CD8-positive, alpha-beta memory T cell (primary cell): ENCODE measurements at regions of chr20 and their contacts with region 1.

Region 1: DNA sequence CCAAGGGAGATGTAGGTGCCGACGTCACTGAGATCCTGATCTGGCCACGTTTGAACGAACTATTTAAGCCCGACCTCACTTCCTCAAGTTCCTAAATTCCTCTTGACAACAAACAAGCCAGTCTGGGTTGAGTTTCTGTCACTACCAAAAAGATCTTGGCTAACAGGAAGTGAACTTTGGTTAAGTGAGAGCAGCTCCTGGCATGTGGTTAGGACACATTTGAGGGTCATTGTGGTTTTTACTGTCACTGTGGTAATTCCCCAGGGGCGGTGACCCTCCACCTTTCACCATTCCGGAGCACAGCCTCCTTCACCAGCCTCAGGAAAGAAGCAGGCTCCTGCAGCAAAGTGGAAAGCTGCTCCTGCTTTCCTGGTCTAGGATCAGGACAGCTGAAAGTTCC is 43.1 kb upstream of the ZNF831 start:
- DNase-seq: peak in 4 of 5 donors; percentile 18 to 69 (median 51)
- H3K4me3 ChIP-seq: no peak overlapping the region
- H3K4me3 Mint-ChIP-seq: peak overlapping the region; percentile 3 to 87 (median 59)
- H3K27ac ChIP-seq: peak overlapping the region; percentile 44
- H3K27ac Mint-ChIP-seq: peak overlapping the region; percentile 95 to 100 (median 99)
- H3K4me1 ChIP-seq: peaks cover 78% of the 10 kb centered on the region
- H3K4me1 Mint-ChIP-seq: peaks cover 71 to 87% (median 84%) of the 10 kb centered on the region in 3 donors
- H3K27me3 ChIP-seq: no peaks in the 10 kb centered on the region
- H3K27me3 Mint-ChIP-seq: peaks cover 0 to 2% of the 10 kb centered on the region in 2 donors

Region 2: DNA sequence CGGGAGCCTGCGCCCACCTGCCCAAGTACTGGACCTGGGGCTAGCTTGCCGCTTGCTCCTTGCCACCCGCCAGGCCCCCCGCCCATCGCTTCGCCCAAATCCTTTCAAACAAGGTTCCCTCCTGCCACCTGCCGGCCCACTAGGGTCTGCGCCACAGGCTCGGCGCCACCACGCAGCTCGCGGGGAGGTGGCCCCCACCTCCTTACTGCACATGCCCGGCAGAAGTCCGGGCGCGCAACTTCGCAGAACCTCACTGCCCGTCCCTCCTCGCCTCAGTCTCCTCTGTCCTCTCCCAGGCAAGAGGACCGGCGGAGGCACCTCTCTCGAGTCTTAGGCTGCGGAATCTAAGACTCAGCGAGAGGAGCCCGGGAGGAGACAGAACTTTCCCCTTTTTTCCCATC is 281.0 kb before region 1 on chr20:
- CTCF ChIA-PET with region 1: no interaction called
- POLR2A ChIA-PET with region 1: no interaction called
- DNase-seq: peak in 1 of 5 donors; percentile 27
- H3K4me3 ChIP-seq: no peak overlapping the region
- H3K4me3 Mint-ChIP-seq: peak overlapping the region in 3 of 7 donors; percentile 11 to 56 (median 32)
- H3K27ac ChIP-seq: no peak overlapping the region
- H3K27ac Mint-ChIP-seq: no peak overlapping the region
- H3K4me1 ChIP-seq: no peaks in the 10 kb centered on the region
- H3K4me1 Mint-ChIP-seq: peaks cover 8 to 21% (median 14%) of the 10 kb centered on the region in 3 donors
- H3K27me3 ChIP-seq: peaks cover 3% of the 10 kb centered on the region
- H3K27me3 Mint-ChIP-seq: peaks cover 37 to 53% of the 10 kb centered on the region in 2 donors

Region 3: GRCh38 chr20:59102841-59103299 is 17.6 kb before region 1 on chr20:
- CTCF ChIA-PET with region 1: interaction called, 10 read pairs
- POLR2A ChIA-PET with region 1: no interaction called
- DNase-seq: no peak
- H3K4me3 ChIP-seq: no peak overlapping the region
- H3K4me3 Mint-ChIP-seq: no peak overlapping the region
- H3K27ac ChIP-seq: no peak overlapping the region
- H3K27ac Mint-ChIP-seq: peak overlapping the region in 3 of 8 donors; percentile 0 to 47 (median 47)
- H3K4me1 ChIP-seq: peaks cover 7% of the 10 kb centered on the region
- H3K4me1 Mint-ChIP-seq: peaks cover 11 to 21% (median 12%) of the 10 kb centered on the region in 3 donors
- H3K27me3 ChIP-seq: no peaks in the 10 kb centered on the region
- H3K27me3 Mint-ChIP-seq: peaks cover 0 to 4% of the 10 kb centered on the region in 2 donors